Mucosa of descending colon (tissue), 3 donors: ENCODE measurements at regions of chr3 and their contacts with region 1.

Region 1: DNA sequence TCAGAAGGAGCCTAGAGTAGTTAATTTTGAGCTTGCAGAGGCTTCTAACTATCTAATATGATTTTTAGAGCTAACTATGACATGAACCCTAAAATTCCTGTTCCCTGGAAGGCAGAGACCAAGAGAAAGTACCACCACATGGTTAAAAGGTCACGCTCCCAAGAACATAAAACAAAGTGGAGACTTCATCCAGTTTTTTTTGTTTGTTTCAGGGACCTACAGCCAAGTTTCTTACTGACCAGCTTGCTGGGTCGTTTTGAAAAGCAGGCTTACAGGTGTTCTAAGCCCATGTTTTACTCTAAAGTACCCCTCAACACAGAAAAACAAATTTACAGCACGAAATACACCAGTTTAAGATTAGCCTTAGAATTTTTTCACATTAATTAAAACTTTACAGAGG is 39.6 kb upstream of the SKIL start:
- DNase-seq: no peak
- ATAC-seq: no peak
- H3K4me3 ChIP-seq: no peak overlapping the region
- H3K4me1 ChIP-seq: no peaks in the 10 kb centered on the region
- CTCF ChIP-seq: no peak

Region 2: DNA sequence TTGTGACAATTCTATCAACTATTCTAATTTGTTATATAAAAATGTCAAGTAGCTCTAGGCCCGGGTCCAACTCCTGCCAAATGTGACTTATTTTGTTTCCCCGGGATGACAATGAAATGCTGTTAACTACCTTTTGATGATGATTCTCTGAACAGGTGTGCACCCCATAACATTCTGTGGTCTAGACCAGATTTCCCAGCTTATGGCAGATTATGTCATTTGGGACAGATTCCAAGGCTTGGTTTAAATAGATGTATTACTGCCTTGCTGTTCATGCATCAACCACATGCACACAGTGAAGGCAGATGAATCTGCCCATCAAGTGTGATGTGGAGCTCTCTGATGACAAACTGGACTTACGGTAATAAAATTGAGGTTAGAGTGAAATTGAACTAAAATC is 805.0 kb before region 1 on chr3:
- intact Hi-C with region 1: no loop called
- DNase-seq: no peak
- ATAC-seq: no peak
- H3K4me3 ChIP-seq: no peak overlapping the region
- H3K4me1 ChIP-seq: no peaks in the 10 kb centered on the region
- CTCF ChIP-seq: no peak

Region 3: GRCh38 chr3:170357176-170357919 is 39.4 kb after region 1 on chr3 and contains the start of gene SKIL:
- intact Hi-C with region 1: no loop called
- DNase-seq: peak; percentile 98 to 99 (median 99)
- ATAC-seq: peak; percentile 83
- H3K4me3 ChIP-seq: peak within 1 kb of the TSS; percentile 83
- H3K4me1 ChIP-seq: peaks cover 12% of the 10 kb centered on the region
- CTCF ChIP-seq: no peak
- total RNA-seq, gene SKIL: 41.9 to 51.3 (median 49.5) TPM

Region 4: DNA sequence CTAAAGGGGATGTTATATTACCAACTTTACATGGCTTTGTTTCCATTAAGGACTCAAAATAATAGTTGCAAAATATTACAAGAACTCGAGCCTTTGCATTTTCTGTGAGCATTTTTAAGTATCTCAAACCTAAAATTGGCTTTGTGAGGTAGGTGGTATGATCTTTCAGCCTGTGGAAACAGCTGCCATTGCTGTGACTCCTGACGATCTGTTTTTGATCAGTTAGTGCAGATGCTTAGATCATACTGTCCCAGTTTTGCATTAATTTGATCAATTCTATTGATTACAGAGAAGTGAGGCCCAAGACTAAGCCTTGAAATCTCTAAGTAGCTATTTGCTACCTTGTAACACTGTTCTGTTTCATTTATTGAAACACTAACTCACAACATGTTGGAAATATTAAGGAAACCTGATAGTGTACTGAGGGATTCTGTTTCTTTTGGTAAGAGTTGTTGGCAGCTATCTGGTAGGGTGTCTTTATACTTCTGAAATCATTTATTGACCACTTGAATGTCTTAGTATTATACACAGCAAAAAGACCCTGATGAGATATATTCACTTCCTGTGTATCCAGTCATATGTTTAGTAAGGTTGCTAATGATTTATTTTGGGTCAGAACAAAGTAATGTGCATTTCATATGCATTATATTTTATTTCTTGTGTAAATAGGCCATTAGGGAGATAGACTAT is 54.4 kb after region 1 on chr3:
- intact Hi-C with region 1: loop called in 1 of 2 experiments (anchors 10 kb)
- DNase-seq: no peak
- ATAC-seq: no peak
- H3K4me3 ChIP-seq: no peak overlapping the region
- H3K4me1 ChIP-seq: no peaks in the 10 kb centered on the region
- CTCF ChIP-seq: no peak